Heart right ventricle (tissue), 16 donors: ENCODE measurements at regions of chr15 and their contacts with region 1.

Region 1: GRCh38 chr15:30922480-30923311 is 19.0 kb downstream of the FAN1 start:
- DNase-seq: no peak
- ATAC-seq: peak; percentile 44 to 73 (median 58)
- H3K4me3 ChIP-seq: no peak overlapping the region
- H3K27ac ChIP-seq: peak overlapping the region in 9 of 10 donors; percentile 33 to 90 (median 74)
- H3K4me1 ChIP-seq: peaks cover 0 to 56% (median 37%) of the 10 kb centered on the region in 9 donors
- H3K27me3 ChIP-seq: no peaks in the 10 kb centered on the region
- CTCF ChIP-seq: no peak

Region 2: GRCh38 chr15:30783019-30783418 is 139.7 kb before region 1 on chr15:
- intact Hi-C with region 1: no loop called
- DNase-seq: no peak
- ATAC-seq: no peak
- H3K4me3 ChIP-seq: no peak overlapping the region
- H3K27ac ChIP-seq: no peak overlapping the region
- H3K4me1 ChIP-seq: no peaks in the 10 kb centered on the region
- H3K27me3 ChIP-seq: no peaks in the 10 kb centered on the region
- CTCF ChIP-seq: no peak

Region 3: DNA sequence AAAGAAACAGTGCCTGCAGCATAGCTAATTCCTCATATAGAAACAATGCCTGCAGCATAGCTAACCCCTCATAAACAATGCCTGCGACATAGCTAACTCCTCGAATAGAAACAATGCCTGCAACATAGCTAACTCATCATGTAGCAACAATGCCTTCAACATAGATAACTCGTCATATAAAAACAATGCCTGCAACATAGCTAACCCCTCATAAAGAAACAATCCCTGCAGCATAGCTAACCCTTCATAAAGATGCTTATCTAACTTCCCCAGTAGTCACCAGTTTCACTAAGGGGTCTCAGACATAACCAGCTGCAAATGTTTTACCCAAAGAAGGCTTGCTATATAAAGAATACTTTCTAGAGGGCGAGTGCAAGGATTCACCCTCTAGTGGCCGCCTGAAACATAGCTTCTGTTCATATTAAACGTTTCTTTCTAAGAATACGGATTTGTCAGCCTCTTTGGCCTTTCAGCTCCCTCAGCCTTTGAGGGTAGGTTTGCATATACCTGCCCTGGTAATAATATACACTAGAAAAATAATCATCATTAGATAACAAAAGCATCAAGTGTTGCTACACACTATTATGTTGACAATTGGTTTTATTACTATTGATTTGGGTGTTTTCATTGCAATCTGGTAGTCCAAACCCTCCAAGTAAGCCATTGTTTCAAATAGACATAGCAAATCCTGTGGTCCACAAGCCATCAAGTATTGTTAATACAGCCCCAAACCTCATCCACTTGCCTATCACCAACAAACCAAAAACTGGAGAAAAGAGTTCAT is 63.4 kb before region 1 on chr15:
- intact Hi-C with region 1: no loop called
- DNase-seq: no peak
- ATAC-seq: no peak
- H3K4me3 ChIP-seq: no peak overlapping the region
- H3K27ac ChIP-seq: no peak overlapping the region
- H3K4me1 ChIP-seq: no peaks in the 10 kb centered on the region
- H3K27me3 ChIP-seq: peaks cover 0 to 2% (median 0%) of the 10 kb centered on the region in 7 donors
- CTCF ChIP-seq: peak; percentile 27 to 72 (median 58)

Region 4: GRCh38 chr15:30979457-30979856 is 56.8 kb after region 1 on chr15:
- intact Hi-C with region 1: loop called in 1 of 10 experiments (anchors 5 kb)
- DNase-seq: no peak
- ATAC-seq: peak in 2 of 8 donors; percentile 39 to 50
- H3K4me3 ChIP-seq: no peak overlapping the region
- H3K27ac ChIP-seq: peak overlapping the region in 1 of 10 donors; percentile 65
- H3K4me1 ChIP-seq: peaks cover 0 to 64% (median 55%) of the 10 kb centered on the region in 9 donors
- H3K27me3 ChIP-seq: no peaks in the 10 kb centered on the region
- CTCF ChIP-seq: no peak

Region 5: DNA sequence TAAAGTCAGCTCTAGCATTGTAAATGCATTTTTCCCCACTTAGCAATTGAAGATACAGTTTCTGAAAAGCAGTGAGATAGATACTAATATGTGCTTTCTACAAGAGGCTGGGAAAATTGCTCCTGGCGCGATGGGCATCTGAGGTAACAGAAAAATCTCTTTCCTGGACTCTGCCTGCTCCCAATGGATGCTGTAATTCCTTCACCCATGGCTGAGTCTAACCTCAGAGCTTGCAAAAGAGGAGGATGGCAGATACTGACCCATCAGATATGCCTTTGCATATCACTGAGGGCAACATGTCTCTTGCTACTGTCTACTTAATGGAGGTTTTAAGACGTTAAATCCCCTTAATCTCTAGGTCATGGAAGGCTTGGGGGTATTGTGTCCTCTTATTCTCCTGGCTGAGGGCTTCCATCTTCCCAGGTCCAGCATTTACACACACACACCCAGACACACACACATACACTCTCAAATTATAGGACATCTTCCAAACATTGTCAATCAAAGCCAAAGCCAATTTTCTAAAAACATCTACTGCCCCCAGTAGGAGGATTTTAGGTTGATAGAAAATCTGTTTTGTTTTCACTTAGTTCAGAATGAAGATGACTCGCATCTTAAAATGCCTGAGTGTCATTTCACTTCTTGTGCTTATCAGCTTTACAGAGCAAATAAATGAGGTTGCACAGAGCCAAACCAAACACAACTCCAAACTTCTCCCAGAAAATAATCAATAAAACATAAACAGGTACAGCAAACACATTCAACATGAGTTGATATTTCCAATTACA is 176.5 kb after region 1 on chr15:
- intact Hi-C with region 1: loop called in 1 of 10 experiments (anchors 10 kb)
- DNase-seq: no peak
- ATAC-seq: no peak
- H3K4me3 ChIP-seq: no peak overlapping the region
- H3K27ac ChIP-seq: no peak overlapping the region
- H3K4me1 ChIP-seq: peaks cover 0 to 7% (median 0%) of the 10 kb centered on the region in 9 donors
- H3K27me3 ChIP-seq: peaks cover 0 to 7% (median 0%) of the 10 kb centered on the region in 7 donors
- CTCF ChIP-seq: peak in 4 of 9 donors; percentile 9 to 37 (median 34)